ENCODE measurements at regions of chr16 and their contacts with region 1.

Region 1: GRCh38 chr16:2194852-2195321 is 1.5 kb downstream of the CASKIN1 start:
- DNase-seq: peak; percentile 55

Region 2: DNA sequence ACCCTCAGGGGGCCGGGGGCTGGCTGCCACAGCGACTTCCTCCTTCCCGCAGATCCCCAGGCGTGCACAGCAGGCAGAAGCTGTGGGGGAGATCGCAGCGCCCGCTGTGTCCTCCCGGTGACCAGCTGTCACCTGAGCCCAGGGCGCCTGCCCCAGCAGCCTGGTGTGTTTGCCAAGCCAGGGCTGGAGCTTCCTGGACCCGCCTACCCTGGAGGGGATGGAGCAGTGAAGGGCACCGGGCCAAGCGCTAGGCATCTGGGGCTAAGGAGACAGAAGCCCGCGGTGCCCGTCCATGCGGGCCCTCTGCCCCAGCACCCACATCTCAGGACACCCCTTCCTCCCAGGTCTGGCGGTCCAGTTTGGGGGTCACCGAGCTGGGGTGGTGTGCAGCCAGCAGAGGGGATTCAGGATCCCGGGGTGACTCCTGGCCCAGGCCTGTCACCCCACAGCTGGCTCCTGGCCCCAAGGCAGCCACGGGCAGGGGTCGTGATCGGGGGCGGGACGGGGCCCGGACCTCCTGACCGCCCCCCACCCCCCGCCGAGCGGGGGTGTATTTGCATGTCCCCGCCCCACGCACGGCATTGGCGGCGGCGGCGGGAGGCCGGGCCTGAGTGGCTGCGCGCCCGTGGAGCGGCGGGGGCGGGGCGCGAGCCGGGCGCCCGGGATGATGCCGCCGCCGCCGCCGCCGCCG is 46.8 kb before region 1 on chr16 and contains the start of gene RAB26:
- CTCF ChIA-PET with region 1: no interaction called
- POLR2A ChIA-PET with region 1: no interaction called
- DNase-seq: peak; percentile 47

Region 3: DNA sequence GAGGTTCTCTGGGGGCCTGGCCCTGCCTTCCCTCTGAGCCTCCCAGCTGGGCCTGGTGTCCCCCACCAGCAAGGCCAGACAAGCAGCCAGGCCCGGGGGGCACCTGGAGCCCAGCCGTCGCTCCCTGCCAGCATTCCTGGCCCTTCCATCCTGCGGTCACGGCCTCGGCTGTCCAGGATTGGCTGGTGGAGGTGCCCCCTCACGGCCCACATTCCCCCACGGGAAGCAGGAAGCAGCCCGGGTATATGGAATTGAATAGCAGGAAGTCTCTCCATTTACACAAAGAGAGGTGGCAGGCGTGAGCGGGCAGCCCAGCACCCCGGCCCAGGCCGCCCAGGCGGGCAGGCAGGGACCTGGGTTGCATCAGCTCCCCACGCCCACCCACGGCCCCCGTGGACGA is 24.8 kb before region 1 on chr16:
- CTCF ChIA-PET with region 1: no interaction called
- POLR2A ChIA-PET with region 1: no interaction called
- DNase-seq: no peak

Region 4: GRCh38 chr16:2180962-2181923 is 13.6 kb before region 1 on chr16:
- CTCF ChIA-PET with region 1: no interaction called
- POLR2A ChIA-PET with region 1: no interaction called
- DNase-seq: no peak

Region 5: GRCh38 chr16:2205104-2205966 is 10.4 kb after region 1 on chr16 and contains the start of gene MLST8:
- CTCF ChIA-PET with region 1: no interaction called
- POLR2A ChIA-PET with region 1: interaction called, 12 read pairs
- DNase-seq: peak; percentile 96

Region 6: DNA sequence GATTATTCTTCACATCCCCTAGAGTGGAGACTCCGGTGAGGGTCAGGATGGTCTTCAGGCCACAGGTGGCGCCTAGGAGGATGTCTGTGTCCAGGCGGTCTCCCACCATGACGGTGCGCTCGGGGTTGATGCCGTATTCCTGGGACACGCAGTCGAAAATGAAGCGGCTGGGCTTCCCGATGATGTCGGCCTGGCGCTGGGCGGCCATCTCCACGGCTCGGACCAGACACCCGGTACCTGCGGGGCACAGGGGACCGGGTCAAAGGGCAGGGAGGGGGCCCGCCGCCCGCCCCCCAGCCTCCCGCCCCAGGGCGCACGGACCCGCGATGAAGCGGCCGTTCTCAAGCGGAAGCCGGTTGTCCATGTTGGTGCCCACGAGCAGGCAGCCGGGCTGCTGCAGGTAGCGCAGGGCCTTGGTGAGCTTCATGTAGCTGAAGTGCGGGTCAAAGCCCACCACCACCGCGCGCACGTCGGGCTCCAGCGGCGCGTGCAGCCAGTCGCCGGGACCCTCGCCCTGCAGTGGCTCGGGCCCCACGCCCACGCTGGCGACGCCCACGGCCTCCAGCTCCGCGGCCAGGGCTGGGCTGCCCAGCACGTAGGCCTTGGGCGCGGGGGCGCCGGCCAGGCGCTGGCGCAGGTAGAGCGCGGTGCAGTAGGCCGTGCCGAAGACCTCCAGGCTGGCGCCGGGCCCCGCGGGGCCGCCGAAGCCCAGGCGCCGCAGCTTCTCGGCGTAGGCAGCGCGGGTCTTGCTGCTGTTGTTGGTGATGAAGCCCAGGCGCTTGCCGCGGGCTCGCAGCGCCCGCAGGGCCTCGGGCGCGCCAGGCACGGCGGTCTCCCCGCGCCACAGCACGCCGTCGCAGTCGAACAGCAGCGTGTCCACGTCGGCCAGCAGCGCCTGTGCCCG is 19.2 kb after region 1 on chr16:
- CTCF ChIA-PET with region 1: no interaction called
- POLR2A ChIA-PET with region 1: interaction called, 17 read pairs
- DNase-seq: no peak